ENCODE measurements at regions of chr10 and their contacts with region 1.

Region 1: GRCh38 chr10:103244663-103245271 is 920 bp upstream of the RPEL1 start:
- DNase-seq: peak; percentile 72 to 83 (median 78)
- H3K4me3 ChIP-seq: no peak overlapping the region
- H3K4me3 Mint-ChIP-seq: no peak overlapping the region
- H3K27ac ChIP-seq: no peak overlapping the region
- H3K27ac Mint-ChIP-seq: no peak overlapping the region
- H3K4me1 ChIP-seq: peaks cover 29% of the 10 kb centered on the region in 2 donors
- H3K4me1 Mint-ChIP-seq: peaks cover 36% of the 10 kb centered on the region
- H3K27me3 ChIP-seq: no peaks in the 10 kb centered on the region
- H3K27me3 Mint-ChIP-seq: peaks cover 0 to 2% (median 2%) of the 10 kb centered on the region in 3 donors
- CTCF ChIP-seq: peak; percentile 89

Region 2: DNA sequence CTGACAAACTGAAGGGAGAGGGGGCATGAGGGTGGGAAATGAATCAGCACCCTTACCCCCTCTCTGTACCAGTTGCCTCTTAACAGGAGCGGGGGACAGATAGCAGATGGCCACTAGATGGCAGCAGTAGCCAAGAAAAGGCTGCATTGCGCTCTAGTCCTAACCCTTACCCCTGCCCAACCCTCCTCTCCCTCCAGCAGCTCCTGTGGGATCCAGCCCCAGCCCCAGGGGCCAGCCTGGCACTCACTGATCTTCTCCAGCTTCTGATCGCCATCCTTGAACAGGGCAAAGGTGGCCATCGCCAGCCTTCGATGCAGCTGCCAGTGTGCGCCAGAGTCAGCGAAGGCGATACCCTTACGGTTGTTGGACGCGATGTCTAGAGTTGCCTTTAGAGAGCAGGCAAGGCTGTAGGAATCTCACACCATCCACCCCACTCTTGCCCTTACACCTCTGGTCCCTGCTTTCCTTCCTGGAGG is 409.7 kb before region 1 on chr10:
- intact Hi-C with region 1: loop called in 1 of 2 experiments (anchors 10 kb)
- DNase-seq: peak; percentile 73 to 88 (median 79)
- H3K4me3 ChIP-seq: no peak overlapping the region
- H3K4me3 Mint-ChIP-seq: no peak overlapping the region
- H3K27ac ChIP-seq: no peak overlapping the region
- H3K27ac Mint-ChIP-seq: peak overlapping the region in 2 of 7 donors; percentile 44 to 51
- H3K4me1 ChIP-seq: no peaks in the 10 kb centered on the region
- H3K4me1 Mint-ChIP-seq: peaks cover 11% of the 10 kb centered on the region
- H3K27me3 ChIP-seq: no peaks in the 10 kb centered on the region
- H3K27me3 Mint-ChIP-seq: peaks cover 2 to 4% (median 3%) of the 10 kb centered on the region in 3 donors
- CTCF ChIP-seq: peak; percentile 88

Region 3: DNA sequence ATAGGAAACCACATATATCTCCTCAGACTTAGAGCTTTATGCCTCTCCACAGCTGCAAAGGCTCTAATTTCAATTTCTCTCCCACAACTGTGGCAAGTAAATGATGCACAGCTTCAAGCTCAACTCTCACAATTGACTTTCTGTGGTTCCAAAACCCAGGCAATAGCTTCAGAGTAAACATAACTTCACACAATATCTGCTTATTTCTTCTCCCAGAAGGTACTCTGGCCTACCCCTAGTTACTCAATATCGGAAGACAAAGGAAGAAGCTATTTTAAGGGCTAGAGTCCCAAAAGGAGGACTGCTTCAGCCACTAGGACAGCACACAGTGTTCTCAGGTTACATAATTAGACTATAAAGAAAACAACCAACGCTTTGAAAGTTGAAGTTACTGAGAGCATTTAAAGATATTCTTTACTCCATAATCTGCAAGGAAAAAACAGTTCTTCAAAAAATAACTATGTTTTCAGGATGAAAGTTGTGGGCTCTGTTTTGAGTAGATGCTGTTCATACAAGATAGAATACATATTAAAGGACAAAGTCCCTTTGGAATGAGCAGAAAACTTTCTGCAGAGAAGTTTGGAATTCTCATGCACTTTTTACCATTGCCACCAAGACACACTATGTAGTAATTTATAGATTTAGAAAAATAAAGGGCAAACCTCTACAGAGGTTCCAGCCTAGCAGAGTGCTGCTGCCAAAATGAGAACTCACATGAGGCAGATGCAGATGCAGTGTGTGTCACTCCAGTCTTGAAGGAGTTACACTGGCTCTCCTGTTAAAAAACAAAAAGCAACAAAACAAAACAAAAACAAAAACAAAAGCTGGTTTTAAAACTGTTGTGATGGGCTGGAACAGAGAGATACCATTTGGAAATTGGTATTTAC is 133.5 kb before region 1 on chr10:
- intact Hi-C with region 1: loop called in 1 of 2 experiments (anchors 10 kb)
- DNase-seq: no peak
- H3K4me3 ChIP-seq: no peak overlapping the region
- H3K4me3 Mint-ChIP-seq: no peak overlapping the region
- H3K27ac ChIP-seq: peak overlapping the region in 1 of 2 donors; percentile 48
- H3K27ac Mint-ChIP-seq: peak overlapping the region in 3 of 7 donors; percentile 1 to 65 (median 38)
- H3K4me1 ChIP-seq: peaks cover 4 to 9% of the 10 kb centered on the region in 2 donors
- H3K4me1 Mint-ChIP-seq: peaks cover 28% of the 10 kb centered on the region
- H3K27me3 ChIP-seq: no peaks in the 10 kb centered on the region
- H3K27me3 Mint-ChIP-seq: no peaks in the 10 kb centered on the region
- CTCF ChIP-seq: no peak

Region 4: DNA sequence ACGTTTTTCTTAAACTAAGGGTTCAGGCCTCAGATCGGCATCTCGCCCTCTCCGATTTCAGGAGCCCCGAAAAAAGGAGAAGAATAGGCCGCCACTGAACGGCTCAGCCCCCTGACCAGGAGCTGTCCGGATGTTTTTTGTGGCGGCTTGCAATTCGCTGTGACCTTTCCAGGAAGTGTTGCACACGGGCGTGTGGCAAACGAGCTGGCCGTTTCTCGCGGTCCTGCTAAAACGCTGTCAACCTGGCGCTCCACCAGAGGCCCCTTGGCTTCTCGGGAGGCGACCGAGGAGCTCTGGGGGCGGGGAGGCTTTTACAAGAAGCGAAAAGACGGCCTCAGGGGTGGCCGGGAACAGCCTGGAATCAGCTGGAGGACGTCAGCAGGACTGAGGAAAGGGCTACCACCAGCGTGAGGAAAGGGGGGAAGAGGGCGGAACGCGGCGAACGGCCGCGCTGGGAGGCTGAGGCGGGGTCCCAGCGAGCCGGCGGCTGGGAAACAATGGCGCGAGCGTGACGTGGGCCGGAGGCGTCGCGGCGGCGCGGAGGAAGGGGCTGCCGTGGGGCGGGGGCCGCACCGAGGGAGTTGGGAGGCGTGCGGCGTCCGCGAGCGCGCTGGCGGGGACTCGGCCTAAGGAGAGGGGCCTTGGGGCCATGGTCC is 52.2 kb before region 1 on chr10:
- intact Hi-C with region 1: loop called (anchors 2 to 5 kb)
- DNase-seq: peak; percentile 81 to 87 (median 84)
- H3K4me3 ChIP-seq: peak overlapping the region; percentile 66 to 98 (median 94)
- H3K4me3 Mint-ChIP-seq: peak overlapping the region; percentile 99 to 100
- H3K27ac ChIP-seq: peak overlapping the region; percentile 94
- H3K27ac Mint-ChIP-seq: peak overlapping the region; percentile 99 to 100 (median 99)
- H3K4me1 ChIP-seq: peaks cover 57 to 69% of the 10 kb centered on the region in 2 donors
- H3K4me1 Mint-ChIP-seq: peaks cover 59% of the 10 kb centered on the region
- H3K27me3 ChIP-seq: no peaks in the 10 kb centered on the region
- H3K27me3 Mint-ChIP-seq: no peaks in the 10 kb centered on the region
- CTCF ChIP-seq: no peak

Region 5: GRCh38 chr10:103225939-103226338 is 18.8 kb before region 1 on chr10:
- intact Hi-C with region 1: loop called in 1 of 2 experiments (anchors 2 kb)
- DNase-seq: peak; percentile 29 to 50 (median 31)
- H3K4me3 ChIP-seq: peak overlapping the region in 1 of 3 experiments; percentile 27
- H3K4me3 Mint-ChIP-seq: peak overlapping the region; percentile 17 to 64
- H3K27ac ChIP-seq: peak overlapping the region; percentile 67 to 74
- H3K27ac Mint-ChIP-seq: peak overlapping the region; percentile 62 to 88 (median 85)
- H3K4me1 ChIP-seq: peaks cover 53 to 68% of the 10 kb centered on the region in 2 donors
- H3K4me1 Mint-ChIP-seq: peaks cover 60% of the 10 kb centered on the region
- H3K27me3 ChIP-seq: no peaks in the 10 kb centered on the region
- H3K27me3 Mint-ChIP-seq: peaks cover 0 to 1% (median 0%) of the 10 kb centered on the region in 3 donors
- CTCF ChIP-seq: no peak